HepG2 (cell line): ENCODE measurements at regions of chr18 and their contacts with region 1.

Region 1: GRCh38 chr18:22169007-22169864 is at the start of gene GATA6:
- DNase-seq: peak; percentile 84
- ATAC-seq: peak; percentile 85
- H3K4me3 ChIP-seq: peak within 1 kb of the TSS; percentile 85 to 91 (median 87)
- H3K27ac ChIP-seq: peak within 1 kb of the TSS; percentile 11
- H3K4me1 ChIP-seq: peaks cover 33% of the 10 kb centered on the region
- H3K27me3 ChIP-seq: peaks cover 0 to 33% of the 10 kb centered on the region in 2 experiments; a peak in 3 of 5 replicates
- CTCF ChIP-seq: peak; percentile 76
- EP300 ChIP-seq: no peak
- POLR2A ChIP-seq: peak; percentile 51 to 53; a peak in 2 of 4 replicates
- RAD21 ChIP-seq: peak; percentile 69
- total RNA-seq, gene GATA6: 2.9 and 3.2 TPM in 2 replicates

Region 2: GRCh38 chr18:21914739-21915319 is 254.4 kb before region 1 on chr18:
- CTCF ChIA-PET with region 1: no interaction called
- POLR2A ChIA-PET with region 1: no interaction called
- in situ Hi-C with region 1: no loop called
- intact Hi-C with region 1: loop called (anchors 1 kb)
- DNase-seq: peak; percentile 53
- ATAC-seq: peak; percentile 74
- H3K4me3 ChIP-seq: no peak overlapping the region
- H3K27ac ChIP-seq: no peak overlapping the region
- H3K4me1 ChIP-seq: no peaks in the 10 kb centered on the region
- H3K27me3 ChIP-seq: no peaks in the 10 kb centered on the region; a peak in 1 of 5 replicates
- CTCF ChIP-seq: peak; percentile 75
- EP300 ChIP-seq: no peak
- POLR2A ChIP-seq: no peak
- RAD21 ChIP-seq: peak; percentile 70; the same call in 1 of the 2 replicates

Region 3: DNA sequence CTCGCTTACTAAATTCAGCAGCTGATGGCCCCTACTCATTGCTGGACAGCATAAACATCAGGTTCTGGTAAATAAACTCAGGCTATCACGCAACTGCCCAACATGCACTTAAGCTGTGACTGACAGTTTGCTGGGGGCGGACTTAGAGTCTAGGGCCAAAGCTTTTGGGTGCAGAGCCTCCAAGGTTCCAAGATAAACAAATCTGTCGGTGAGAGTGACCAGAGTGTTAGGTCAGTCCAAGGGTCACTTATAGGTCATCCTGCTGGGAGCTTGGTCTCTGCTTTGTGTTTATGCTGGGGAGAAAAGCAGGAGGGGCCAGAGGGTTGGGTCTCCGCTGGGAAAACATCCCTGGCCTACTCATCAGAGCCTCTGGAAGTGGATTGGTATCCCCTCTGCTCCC is 188.5 kb before region 1 on chr18:
- CTCF ChIA-PET with region 1: no interaction called
- POLR2A ChIA-PET with region 1: interaction called, 5 read pairs
- in situ Hi-C with region 1: loop called (anchors 10 kb)
- intact Hi-C with region 1: no loop called
- DNase-seq: peak; percentile 97
- ATAC-seq: peak; percentile 98
- H3K4me3 ChIP-seq: peak overlapping the region in 1 of 3 experiments; percentile 3; a peak in 1 of 6 replicates
- H3K27ac ChIP-seq: no peak overlapping the region
- H3K4me1 ChIP-seq: peaks cover 40% of the 10 kb centered on the region
- H3K27me3 ChIP-seq: no peaks in the 10 kb centered on the region
- CTCF ChIP-seq: peak; percentile 18; the same call in 1 of the 2 replicates
- EP300 ChIP-seq: peak in 1 of 2 experiments; percentile 69; a peak in 2 of 4 replicates
- POLR2A ChIP-seq: no peak
- RAD21 ChIP-seq: no peak

Region 4: GRCh38 chr18:21991081-21991581 is 178.1 kb before region 1 on chr18:
- CTCF ChIA-PET with region 1: no interaction called
- POLR2A ChIA-PET with region 1: no interaction called
- in situ Hi-C with region 1: loop called (anchors 10 kb)
- intact Hi-C with region 1: loop called (anchors 1 kb)
- DNase-seq: peak; percentile 81
- ATAC-seq: peak; percentile 82
- H3K4me3 ChIP-seq: no peak overlapping the region
- H3K27ac ChIP-seq: no peak overlapping the region
- H3K4me1 ChIP-seq: peaks cover 33% of the 10 kb centered on the region
- H3K27me3 ChIP-seq: peaks cover 0 to 10% of the 10 kb centered on the region in 2 experiments; a peak in 1 of 5 replicates
- CTCF ChIP-seq: no peak
- EP300 ChIP-seq: peak in 1 of 2 experiments; percentile 51; a peak in 1 of 4 replicates
- POLR2A ChIP-seq: no peak
- RAD21 ChIP-seq: no peak

Region 5: GRCh38 chr18:22020127-22020866 is 148.9 kb before region 1 on chr18:
- CTCF ChIA-PET with region 1: no interaction called
- POLR2A ChIA-PET with region 1: interaction called, 4 read pairs
- in situ Hi-C with region 1: no loop called
- intact Hi-C with region 1: loop called (anchors 10 kb)
- DNase-seq: peak; percentile 80
- ATAC-seq: peak; percentile 97
- H3K4me3 ChIP-seq: peak overlapping the region; percentile 18 to 64 (median 48); a peak in 5 of 6 replicates
- H3K27ac ChIP-seq: peak overlapping the region; percentile 62
- H3K4me1 ChIP-seq: peaks cover 56% of the 10 kb centered on the region
- H3K27me3 ChIP-seq: no peaks in the 10 kb centered on the region
- CTCF ChIP-seq: no peak
- EP300 ChIP-seq: no peak
- POLR2A ChIP-seq: no peak
- RAD21 ChIP-seq: no peak

Region 6: DNA sequence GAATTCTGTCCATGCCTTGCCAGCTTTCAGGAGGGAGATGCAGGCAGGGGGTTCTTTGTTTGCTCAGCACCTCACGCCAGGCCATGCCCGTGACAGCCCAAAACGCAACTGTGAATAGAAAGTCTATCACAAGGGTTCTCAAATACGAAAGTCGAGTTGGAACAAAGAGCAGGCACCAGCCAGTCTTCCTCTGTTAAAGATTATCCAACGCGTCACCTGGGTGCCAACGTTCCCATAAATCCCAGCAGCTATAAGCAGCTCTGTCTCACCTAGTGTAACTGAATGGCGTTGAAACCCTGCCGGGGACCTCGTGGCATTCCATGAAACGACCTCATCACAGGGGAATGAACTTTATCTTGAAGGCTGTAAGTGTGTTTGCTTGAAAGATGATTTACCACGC is 84.7 kb before region 1 on chr18:
- CTCF ChIA-PET with region 1: no interaction called
- POLR2A ChIA-PET with region 1: no interaction called
- in situ Hi-C with region 1: no loop called
- intact Hi-C with region 1: no loop called
- DNase-seq: peak; percentile 78
- ATAC-seq: peak; percentile 92
- H3K4me3 ChIP-seq: peak overlapping the region in 1 of 3 experiments; percentile 19; a peak in 1 of 6 replicates
- H3K27ac ChIP-seq: no peak overlapping the region
- H3K4me1 ChIP-seq: peaks cover 52% of the 10 kb centered on the region
- H3K27me3 ChIP-seq: no peaks in the 10 kb centered on the region
- CTCF ChIP-seq: no peak
- EP300 ChIP-seq: no peak
- POLR2A ChIP-seq: no peak
- RAD21 ChIP-seq: no peak

Region 7: GRCh38 chr18:22152134-22152533 is 17.1 kb before region 1 on chr18:
- CTCF ChIA-PET with region 1: no interaction called
- POLR2A ChIA-PET with region 1: no interaction called
- in situ Hi-C with region 1: no loop called
- intact Hi-C with region 1: no loop called
- DNase-seq: no peak
- ATAC-seq: no peak
- H3K4me3 ChIP-seq: no peak overlapping the region
- H3K27ac ChIP-seq: no peak overlapping the region
- H3K4me1 ChIP-seq: no peaks in the 10 kb centered on the region
- H3K27me3 ChIP-seq: no peaks in the 10 kb centered on the region
- CTCF ChIP-seq: no peak
- EP300 ChIP-seq: no peak
- POLR2A ChIP-seq: no peak
- RAD21 ChIP-seq: no peak

Region 8: GRCh38 chr18:22182884-22183697 is 13.9 kb after region 1 on chr18:
- CTCF ChIA-PET with region 1: no interaction called
- POLR2A ChIA-PET with region 1: no interaction called
- in situ Hi-C with region 1: no loop called
- intact Hi-C with region 1: no loop called
- DNase-seq: no peak
- ATAC-seq: no peak
- H3K4me3 ChIP-seq: no peak overlapping the region
- H3K27ac ChIP-seq: no peak overlapping the region
- H3K4me1 ChIP-seq: no peaks in the 10 kb centered on the region
- H3K27me3 ChIP-seq: no peaks in the 10 kb centered on the region
- CTCF ChIP-seq: no peak
- EP300 ChIP-seq: no peak
- POLR2A ChIP-seq: no peak
- RAD21 ChIP-seq: no peak

Region 9: GRCh38 chr18:22214731-22215528 is 45.7 kb after region 1 on chr18:
- CTCF ChIA-PET with region 1: no interaction called
- POLR2A ChIA-PET with region 1: no interaction called
- in situ Hi-C with region 1: no loop called
- intact Hi-C with region 1: loop called (anchors 10 kb)
- DNase-seq: no peak
- ATAC-seq: no peak
- H3K4me3 ChIP-seq: no peak overlapping the region
- H3K27ac ChIP-seq: no peak overlapping the region
- H3K4me1 ChIP-seq: peaks cover 20% of the 10 kb centered on the region
- H3K27me3 ChIP-seq: no peaks in the 10 kb centered on the region
- CTCF ChIP-seq: no peak
- EP300 ChIP-seq: no peak
- POLR2A ChIP-seq: no peak
- RAD21 ChIP-seq: no peak

Region 10: GRCh38 chr18:22282311-22283112 is 113.3 kb after region 1 on chr18:
- CTCF ChIA-PET with region 1: no interaction called
- POLR2A ChIA-PET with region 1: no interaction called
- in situ Hi-C with region 1: no loop called
- intact Hi-C with region 1: loop called (anchors 10 kb)
- DNase-seq: peak; percentile 86
- ATAC-seq: peak; percentile 72
- H3K4me3 ChIP-seq: peak overlapping the region in 2 of 3 experiments; percentile 16 to 25; a peak in 2 of 6 replicates
- H3K27ac ChIP-seq: peak overlapping the region; percentile 50
- H3K4me1 ChIP-seq: peaks cover 30% of the 10 kb centered on the region
- H3K27me3 ChIP-seq: no peaks in the 10 kb centered on the region; a peak in 1 of 5 replicates
- CTCF ChIP-seq: no peak
- EP300 ChIP-seq: peak in 1 of 2 experiments; percentile 31; a peak in 1 of 4 replicates
- POLR2A ChIP-seq: no peak
- RAD21 ChIP-seq: no peak